Activated CD8-positive, alpha-beta T cell treated with anti-CD3 and anti-CD28 coated beads, Interleukin-2, amount 10 ng/mL, durations not matched to agents 7 days and 5 days (primary cell): ENCODE measurements at regions of chr19 and their contacts with region 1.

Region 1: GRCh38 chr19:4524808-4525562 is 6.7 kb upstream of the PLIN4 start:
- DNase-seq: peak; percentile 76
- ATAC-seq: peak; percentile 72
- H3K4me3 Mint-ChIP-seq: no peak overlapping the region
- H3K27ac Mint-ChIP-seq: no peak overlapping the region
- H3K4me1 Mint-ChIP-seq: no peaks in the 10 kb centered on the region
- H3K27me3 Mint-ChIP-seq: no peaks in the 10 kb centered on the region

Region 2: DNA sequence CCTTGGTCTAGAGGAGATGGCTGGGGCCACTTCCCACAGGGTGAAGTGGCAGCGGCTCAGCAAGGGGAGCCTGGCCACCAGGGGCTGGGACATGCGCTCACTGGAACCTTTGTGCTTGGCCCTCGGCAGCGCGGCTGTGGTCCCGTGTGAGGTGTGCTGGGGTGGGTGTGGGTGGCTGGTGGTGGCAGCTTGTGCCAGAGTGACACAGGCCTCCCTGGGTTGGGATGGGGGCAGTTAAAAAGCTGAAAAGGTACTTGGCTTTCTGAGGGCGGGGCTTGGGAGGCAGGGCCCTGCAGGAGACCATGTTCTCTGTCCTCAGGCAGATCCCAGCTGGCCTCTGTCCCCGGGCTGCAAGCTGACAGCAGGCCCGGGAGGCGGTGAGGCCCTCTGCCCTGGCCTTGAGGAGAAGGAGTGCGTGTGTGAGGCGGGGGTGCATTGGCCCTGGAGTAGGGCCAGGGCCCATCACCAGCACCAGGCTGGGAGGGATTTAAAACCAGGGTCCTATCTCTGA is 164.3 kb before region 1 on chr19:
- CTCF ChIA-PET with region 1: no interaction called
- POLR2A ChIA-PET with region 1: no interaction called
- DNase-seq: no peak
- ATAC-seq: no peak
- H3K4me3 Mint-ChIP-seq: no peak overlapping the region
- H3K27ac Mint-ChIP-seq: peak overlapping the region; percentile 68
- H3K4me1 Mint-ChIP-seq: no peaks in the 10 kb centered on the region
- H3K27me3 Mint-ChIP-seq: no peaks in the 10 kb centered on the region

Region 3: GRCh38 chr19:4471403-4472173 is 53.4 kb before region 1 on chr19:
- CTCF ChIA-PET with region 1: interaction called, 10 read pairs
- POLR2A ChIA-PET with region 1: interaction called, 4 read pairs
- DNase-seq: peak; percentile 99
- ATAC-seq: peak; percentile 93
- H3K4me3 Mint-ChIP-seq: no peak overlapping the region
- H3K27ac Mint-ChIP-seq: no peak overlapping the region
- H3K4me1 Mint-ChIP-seq: peaks cover 29% of the 10 kb centered on the region
- H3K27me3 Mint-ChIP-seq: no peaks in the 10 kb centered on the region

Region 4: GRCh38 chr19:4534836-4535658 is 10.1 kb after region 1 on chr19 and contains the start of gene PLIN5:
- CTCF ChIA-PET with region 1: interaction called, 39 read pairs
- POLR2A ChIA-PET with region 1: no interaction called
- DNase-seq: peak; percentile 42
- ATAC-seq: peak; percentile 72
- H3K4me3 Mint-ChIP-seq: no peak within 1 kb of the TSS
- H3K27ac Mint-ChIP-seq: no peak within 1 kb of the TSS
- H3K4me1 Mint-ChIP-seq: peaks cover 3% of the 10 kb centered on the region
- H3K27me3 Mint-ChIP-seq: peaks cover 7% of the 10 kb centered on the region
- total RNA-seq, gene PLIN5: not detected